Natural killer cell (primary cell): ENCODE measurements at regions of chr12 and their contacts with region 1.

Region 1: DNA sequence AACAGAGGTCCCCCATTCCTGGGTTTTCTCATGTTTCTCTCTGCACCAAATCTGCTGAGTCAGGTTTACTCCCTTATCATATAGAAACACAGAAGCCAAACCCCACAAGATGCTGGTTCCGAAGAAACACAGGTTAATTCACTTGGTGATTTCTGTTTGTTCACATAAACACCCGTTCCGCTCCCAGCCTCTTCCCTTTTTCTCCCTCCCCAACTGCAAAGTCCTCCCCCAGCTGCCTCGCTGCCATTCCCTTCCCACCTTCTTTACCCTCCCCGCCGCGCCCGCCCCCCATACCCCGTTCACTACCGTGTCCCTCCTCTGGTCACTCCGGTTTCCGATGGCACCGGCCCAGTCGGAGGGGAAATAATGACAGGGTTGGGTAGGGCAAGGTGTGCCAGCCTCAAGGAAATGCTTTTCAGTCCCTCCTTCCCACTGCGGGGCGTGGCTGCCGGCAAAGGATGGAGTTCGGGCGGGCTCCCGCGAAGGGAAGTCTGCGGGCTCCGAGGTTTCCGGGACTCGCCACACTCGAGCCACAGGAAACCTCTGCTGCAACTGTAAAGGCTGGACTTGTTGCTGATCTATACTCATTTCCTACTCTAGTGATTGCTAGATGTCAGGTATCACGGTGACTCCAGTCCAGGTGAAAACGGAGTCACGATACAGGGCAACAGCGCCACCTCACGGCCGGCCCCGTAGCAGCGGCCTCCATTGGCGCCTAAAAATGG is at the start of gene STYK1:
- DNase-seq: peak; percentile 65 to 86
- ATAC-seq: peak; percentile 59 to 80 (median 76)
- H3K4me3 ChIP-seq: peak within 1 kb of the TSS; percentile 34
- H3K4me3 Mint-ChIP-seq: peak within 1 kb of the TSS; percentile 80
- H3K27ac ChIP-seq: peak within 1 kb of the TSS; percentile 40
- H3K27ac Mint-ChIP-seq: peak within 1 kb of the TSS; percentile 64 to 74
- H3K4me1 ChIP-seq: peaks cover 30% of the 10 kb centered on the region
- H3K4me1 Mint-ChIP-seq: peaks cover 42 to 48% of the 10 kb centered on the region in 2 donors
- H3K27me3 ChIP-seq: peaks cover 20% of the 10 kb centered on the region
- H3K27me3 Mint-ChIP-seq: peaks cover 22 to 40% of the 10 kb centered on the region in 2 donors
- CTCF ChIP-seq: peak; percentile 94
- total RNA-seq, gene STYK1: 2.0 to 2.6 (median 2.4) TPM

Region 2: GRCh38 chr12:10153271-10154144 is 520.3 kb before region 1 on chr12:
- intact Hi-C with region 1: loop called (anchors 5 kb)
- DNase-seq: peak; percentile 61 to 79
- ATAC-seq: peak; percentile 83 to 90 (median 88)
- H3K4me3 ChIP-seq: peak overlapping the region; percentile 64
- H3K4me3 Mint-ChIP-seq: peak overlapping the region; percentile 92
- H3K27ac ChIP-seq: peak overlapping the region; percentile 26
- H3K27ac Mint-ChIP-seq: peak overlapping the region in 1 of 2 donors; percentile 85
- H3K4me1 ChIP-seq: peaks cover 14% of the 10 kb centered on the region
- H3K4me1 Mint-ChIP-seq: peaks cover 15% of the 10 kb centered on the region in 2 donors
- H3K27me3 ChIP-seq: peaks cover 3% of the 10 kb centered on the region
- H3K27me3 Mint-ChIP-seq: peaks cover 7 to 11% of the 10 kb centered on the region in 2 donors
- CTCF ChIP-seq: peak; percentile 86

Region 3: GRCh38 chr12:10235761-10236631 is 437.8 kb before region 1 on chr12:
- intact Hi-C with region 1: loop called (anchors 5 kb)
- DNase-seq: peak; percentile 53 to 83
- ATAC-seq: peak; percentile 76 to 84 (median 77)
- H3K4me3 ChIP-seq: no peak overlapping the region
- H3K4me3 Mint-ChIP-seq: peak overlapping the region; percentile 56
- H3K27ac ChIP-seq: peak overlapping the region; percentile 51
- H3K27ac Mint-ChIP-seq: peak overlapping the region; percentile 85 to 89
- H3K4me1 ChIP-seq: peaks cover 26% of the 10 kb centered on the region
- H3K4me1 Mint-ChIP-seq: peaks cover 57% of the 10 kb centered on the region in 2 donors
- H3K27me3 ChIP-seq: no peaks in the 10 kb centered on the region
- H3K27me3 Mint-ChIP-seq: no peaks in the 10 kb centered on the region
- CTCF ChIP-seq: peak; percentile 96